Mammary epithelial cell (primary cell): ENCODE measurements at regions of chr6 and their contacts with region 1.

Region 1: DNA sequence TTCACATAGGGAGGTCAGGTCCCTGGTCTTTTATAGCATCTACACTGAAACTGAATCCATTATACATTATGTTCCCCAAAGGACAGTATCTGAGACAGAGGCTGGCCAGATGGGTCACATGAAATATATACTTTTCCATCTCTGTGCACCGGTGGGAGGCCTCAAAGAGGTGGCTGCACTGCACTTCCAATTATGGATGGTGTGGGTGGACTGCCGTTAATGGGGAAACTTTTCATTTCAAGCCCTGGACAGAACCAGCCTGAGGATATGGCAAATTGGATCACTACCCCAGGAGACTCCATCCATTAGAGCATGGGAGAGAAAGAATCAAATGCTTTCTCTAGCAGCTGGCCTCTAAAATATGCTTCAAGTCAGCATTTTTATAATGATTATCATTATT is 280.5 kb upstream of the OPRM1 start:
- DNase-seq: no peak
- H3K4me3 ChIP-seq: no peak overlapping the region
- H3K27ac ChIP-seq: no peak overlapping the region
- H3K4me1 ChIP-seq: no peaks in the 10 kb centered on the region
- H3K27me3 ChIP-seq: no peaks in the 10 kb centered on the region
- CTCF ChIP-seq: no peak

Region 2: DNA sequence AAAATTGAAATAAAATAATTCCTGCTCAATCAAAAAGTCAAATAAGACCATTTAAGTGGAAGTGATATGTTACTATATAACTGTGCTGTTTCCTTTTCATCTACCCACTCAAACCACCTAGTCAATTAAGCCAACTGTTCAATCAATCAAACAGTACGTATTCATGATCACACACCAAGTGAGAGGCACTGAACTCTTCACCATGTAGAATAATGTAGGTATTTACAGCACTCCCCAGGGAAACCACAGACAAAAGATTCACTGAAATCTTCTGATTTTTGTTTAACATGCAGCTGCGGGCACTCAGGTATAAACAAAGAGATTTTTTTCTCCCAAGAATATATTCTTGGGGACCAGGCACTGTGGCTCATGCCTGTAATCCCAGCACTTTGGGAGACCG is 259.3 kb after region 1 on chr6:
- CTCF ChIA-PET with region 1: interaction called, 14 read pairs
- dilution Hi-C with region 1: no loop called
- in situ Hi-C with region 1: no loop called
- intact Hi-C with region 1: no loop called
- DNase-seq: no peak
- H3K4me3 ChIP-seq: no peak overlapping the region
- H3K27ac ChIP-seq: no peak overlapping the region
- H3K4me1 ChIP-seq: no peaks in the 10 kb centered on the region
- H3K27me3 ChIP-seq: no peaks in the 10 kb centered on the region
- CTCF ChIP-seq: no peak

Region 3: DNA sequence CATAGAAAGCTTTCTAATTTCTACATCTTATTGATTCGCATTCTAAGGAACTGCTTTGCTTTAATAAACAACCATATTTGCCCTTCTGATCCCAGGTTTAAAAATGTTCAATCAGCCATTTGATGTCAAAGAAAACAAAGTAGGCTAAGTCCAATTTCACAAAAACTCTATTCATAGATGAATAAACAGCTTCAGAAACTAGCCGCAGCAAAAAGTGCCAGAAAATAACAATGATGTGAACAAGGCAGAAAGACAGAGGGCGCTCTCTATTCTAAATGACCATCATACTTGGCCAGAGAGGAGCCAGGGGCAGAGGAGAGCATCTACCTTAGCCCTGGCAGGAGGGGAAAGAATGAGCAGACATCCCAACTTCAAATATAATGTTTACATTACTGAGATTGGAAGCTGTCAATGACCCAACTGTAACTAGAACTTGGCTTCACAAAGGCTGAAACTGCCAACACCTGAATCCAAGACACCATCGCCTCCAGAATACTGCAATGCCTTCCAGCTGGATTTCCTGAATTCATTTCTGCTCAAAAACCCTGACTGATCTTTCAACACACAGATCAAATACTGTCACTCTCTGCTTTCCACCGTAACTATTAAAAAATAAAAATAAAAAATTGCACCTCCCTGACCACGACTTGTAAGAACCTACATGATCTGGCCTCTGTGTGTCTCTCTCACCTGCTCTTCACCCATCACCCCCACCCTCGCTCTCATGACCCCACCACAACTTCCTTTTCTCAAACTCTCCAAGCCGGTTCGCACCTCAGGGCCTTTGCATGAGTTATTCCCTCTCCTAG is 742.5 kb after region 1 on chr6:
- CTCF ChIA-PET with region 1: no interaction called
- dilution Hi-C with region 1: no loop called
- in situ Hi-C with region 1: no loop called
- intact Hi-C with region 1: no loop called
- DNase-seq: no peak
- H3K4me3 ChIP-seq: no peak overlapping the region
- H3K27ac ChIP-seq: no peak overlapping the region
- H3K4me1 ChIP-seq: peaks cover 6% of the 10 kb centered on the region
- H3K27me3 ChIP-seq: no peaks in the 10 kb centered on the region
- CTCF ChIP-seq: peak; percentile 25 to 39